PC-9 (cell line): ENCODE measurements at regions of chr18 and their contacts with region 1.

Region 1: DNA sequence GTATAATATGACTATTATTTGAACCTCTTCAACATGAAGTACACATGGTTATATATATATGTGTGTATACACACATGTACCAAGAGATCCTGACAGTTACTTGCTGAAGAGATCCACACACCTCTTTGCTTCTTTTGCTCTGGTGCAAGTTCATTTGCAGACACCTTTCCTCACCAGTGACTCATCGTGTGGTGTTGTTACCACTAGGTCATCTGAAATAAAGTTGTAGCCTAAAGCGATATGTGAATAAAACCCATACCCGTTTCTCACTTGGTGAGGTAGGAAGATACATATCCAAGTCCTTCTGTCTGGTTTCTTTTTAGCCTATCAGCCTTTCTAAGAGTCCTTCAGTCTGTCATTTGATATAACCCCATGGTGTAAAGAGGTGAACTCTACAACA is 379.5 kb upstream of the RAB12 start:
- DNase-seq: peak in 1 of 2 experiments; percentile 57
- H3K4me3 ChIP-seq: no peak overlapping the region
- H3K27ac ChIP-seq: no peak overlapping the region
- H3K4me1 ChIP-seq: peaks cover 15% of the 10 kb centered on the region
- H3K27me3 ChIP-seq: no peaks in the 10 kb centered on the region
- CTCF ChIP-seq: no peak

Region 2: GRCh38 chr18:8121942-8122480 is 107.8 kb before region 1 on chr18:
- CTCF ChIA-PET with region 1: no interaction called
- POLR2A ChIA-PET with region 1: interaction called, 7 read pairs
- intact Hi-C with region 1: loop called (anchors 5 kb)
- DNase-seq: peak; percentile 71 to 81
- H3K4me3 ChIP-seq: no peak overlapping the region
- H3K27ac ChIP-seq: peak overlapping the region; percentile 70
- H3K4me1 ChIP-seq: peaks cover 69% of the 10 kb centered on the region
- H3K27me3 ChIP-seq: no peaks in the 10 kb centered on the region
- CTCF ChIP-seq: no peak

Region 3: DNA sequence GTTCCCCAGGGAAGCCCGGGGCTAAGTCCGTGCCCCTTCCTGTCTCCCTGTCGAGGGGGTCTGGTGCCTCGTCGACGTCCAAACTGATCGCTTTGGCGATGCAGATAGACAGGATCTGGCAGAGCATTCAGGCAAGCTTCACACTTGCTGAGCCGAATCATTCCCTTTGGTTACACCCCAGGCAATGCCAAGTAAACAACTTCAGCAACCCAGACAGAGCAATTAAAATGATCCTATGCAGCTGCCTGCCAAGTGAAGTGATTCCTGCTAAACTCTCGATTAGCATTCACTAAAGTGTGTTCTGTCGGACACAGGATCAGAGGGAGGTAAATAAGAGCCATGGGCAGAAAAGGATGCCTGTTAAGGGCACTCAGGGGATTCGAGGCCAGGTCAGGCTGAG is 271.3 kb after region 1 on chr18:
- CTCF ChIA-PET with region 1: interaction called, 12 read pairs
- POLR2A ChIA-PET with region 1: no interaction called
- intact Hi-C with region 1: no loop called
- DNase-seq: no peak
- H3K4me3 ChIP-seq: no peak overlapping the region
- H3K27ac ChIP-seq: no peak overlapping the region
- H3K4me1 ChIP-seq: peaks cover 7% of the 10 kb centered on the region; the same call in 1 of the 2 replicates
- H3K27me3 ChIP-seq: peaks cover 12% of the 10 kb centered on the region; the same call in 1 of the 2 replicates
- CTCF ChIP-seq: no peak